Activated T-helper 1 cell treated with anti-CD3 and anti-CD28 coated beads, Interleukin-12 subunit alpha, Interleukin-12 subunit beta, Interleukin-2, Interleukin-4 antibody, amounts not matched to agents 30 ng/mL and 10 ng/mL and 1 ng/mL, durations not matched to agents 14 hours and 24 hours and 36 hours (primary cell): ENCODE measurements at regions of chr13 and their contacts with region 1.

Region 1: GRCh38 chr13:43041369-43041921 is 18.1 kb downstream of the DNAJC15 start:
- DNase-seq: no peak
- H3K4me3 Mint-ChIP-seq: no peak overlapping the region
- H3K27ac Mint-ChIP-seq: no peak overlapping the region
- H3K4me1 Mint-ChIP-seq: peaks cover 51% of the 10 kb centered on the region
- H3K27me3 Mint-ChIP-seq: no peaks in the 10 kb centered on the region

Region 2: GRCh38 chr13:42865768-42866102 is 175.7 kb before region 1 on chr13:
- intact Hi-C with region 1: no loop called
- DNase-seq: no peak
- H3K4me3 Mint-ChIP-seq: no peak overlapping the region
- H3K27ac Mint-ChIP-seq: no peak overlapping the region
- H3K4me1 Mint-ChIP-seq: no peaks in the 10 kb centered on the region
- H3K27me3 Mint-ChIP-seq: peaks cover 3% of the 10 kb centered on the region

Region 3: GRCh38 chr13:42997381-42997780 is 44.1 kb before region 1 on chr13:
- intact Hi-C with region 1: loop called (anchors 1 kb)
- DNase-seq: no peak
- H3K4me3 Mint-ChIP-seq: peak overlapping the region; percentile 19
- H3K27ac Mint-ChIP-seq: peak overlapping the region; percentile 36
- H3K4me1 Mint-ChIP-seq: peaks cover 69% of the 10 kb centered on the region
- H3K27me3 Mint-ChIP-seq: no peaks in the 10 kb centered on the region

Region 4: GRCh38 chr13:43054803-43055802 is 13.7 kb after region 1 on chr13:
- intact Hi-C with region 1: loop called (anchors 1 kb)
- DNase-seq: peak; percentile 8
- H3K4me3 Mint-ChIP-seq: no peak overlapping the region
- H3K27ac Mint-ChIP-seq: no peak overlapping the region
- H3K4me1 Mint-ChIP-seq: peaks cover 6% of the 10 kb centered on the region
- H3K27me3 Mint-ChIP-seq: no peaks in the 10 kb centered on the region

Region 5: DNA sequence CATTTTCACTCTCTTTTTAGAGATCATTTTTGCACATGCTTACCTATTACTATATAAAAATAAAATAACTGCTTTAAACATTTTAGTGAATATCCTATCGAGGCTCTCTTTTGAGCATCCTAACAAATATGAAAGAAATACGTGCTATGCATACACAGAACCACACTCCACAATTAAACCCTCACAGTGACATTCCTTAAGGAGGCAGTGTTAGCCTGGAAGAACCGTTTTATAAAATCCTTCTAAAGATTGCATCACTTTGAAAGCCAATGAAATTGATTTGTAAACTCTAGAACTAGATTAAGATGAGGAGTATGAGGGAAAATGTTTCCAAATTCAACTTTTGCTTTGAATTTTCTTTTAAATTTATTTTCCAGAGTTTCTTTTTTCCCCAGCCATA is 756.4 kb after region 1 on chr13:
- intact Hi-C with region 1: loop called (anchors 5 kb)
- DNase-seq: no peak
- H3K4me3 Mint-ChIP-seq: no peak overlapping the region
- H3K27ac Mint-ChIP-seq: no peak overlapping the region
- H3K4me1 Mint-ChIP-seq: peaks cover 14% of the 10 kb centered on the region
- H3K27me3 Mint-ChIP-seq: peaks cover 12% of the 10 kb centered on the region